ENCODE measurements at regions of chr17 and their contacts with region 1.

Region 1: DNA sequence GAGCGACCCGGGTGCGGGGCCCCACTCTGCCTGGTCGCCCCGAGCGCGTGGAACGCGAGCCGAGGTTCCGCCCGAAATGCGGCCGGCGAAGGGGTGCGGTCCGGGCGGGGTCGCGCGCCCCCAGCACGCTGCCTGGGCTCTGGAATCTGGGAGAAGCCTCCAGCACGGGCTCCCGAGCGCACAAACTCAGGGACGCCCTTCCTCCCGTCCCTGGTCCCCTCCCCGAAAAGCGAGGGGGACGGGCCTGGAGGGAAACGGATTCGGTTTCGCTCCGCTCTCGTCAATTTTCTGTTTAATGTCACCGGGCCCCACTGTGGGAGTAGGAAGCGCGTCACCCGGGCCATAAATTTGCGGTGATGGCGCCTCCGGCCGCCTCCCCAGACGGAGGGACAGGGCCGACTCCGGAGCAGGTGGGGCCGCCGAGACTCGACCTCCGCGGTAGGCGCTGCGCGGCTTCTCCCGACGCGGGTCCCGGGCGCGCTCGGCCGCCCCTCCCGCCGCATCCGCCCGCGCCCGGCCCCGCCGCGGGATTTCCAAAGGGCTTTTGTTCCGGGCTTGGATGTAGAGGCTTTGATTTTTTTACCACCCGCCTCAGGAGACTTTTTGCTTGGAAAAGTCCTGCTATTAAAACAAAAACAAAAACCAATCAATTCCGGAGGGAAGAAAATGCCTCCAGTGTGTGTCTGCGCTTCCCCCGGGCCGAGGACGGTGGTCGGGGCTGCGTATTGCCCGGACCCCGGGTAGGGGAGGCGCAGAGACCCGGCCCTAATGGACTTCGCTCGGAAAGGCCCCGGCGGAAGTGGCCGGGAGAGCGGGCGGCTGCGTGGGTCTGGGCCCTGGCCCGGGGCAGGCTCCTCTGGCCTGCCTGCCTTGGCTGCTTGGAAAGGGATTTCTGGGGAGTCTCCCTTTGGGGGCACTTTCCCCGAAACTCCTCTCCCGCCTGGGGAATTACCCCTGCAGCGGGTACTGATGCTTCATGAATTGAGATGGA is 7.9 kb upstream of the BAHCC1 start:
- DNase-seq: peak in 1 of 2 donors; percentile 65
- H3K4me3 ChIP-seq: peak overlapping the region; percentile 74 to 83
- H3K27ac ChIP-seq: peak overlapping the region; percentile 91 to 96
- H3K4me1 ChIP-seq: peaks cover 0 to 63% (median 47%) of the 10 kb centered on the region in 4 donors
- H3K27me3 ChIP-seq: peaks cover 0 to 13% of the 10 kb centered on the region in 2 donors
- CTCF ChIP-seq: no peak

Region 2: DNA sequence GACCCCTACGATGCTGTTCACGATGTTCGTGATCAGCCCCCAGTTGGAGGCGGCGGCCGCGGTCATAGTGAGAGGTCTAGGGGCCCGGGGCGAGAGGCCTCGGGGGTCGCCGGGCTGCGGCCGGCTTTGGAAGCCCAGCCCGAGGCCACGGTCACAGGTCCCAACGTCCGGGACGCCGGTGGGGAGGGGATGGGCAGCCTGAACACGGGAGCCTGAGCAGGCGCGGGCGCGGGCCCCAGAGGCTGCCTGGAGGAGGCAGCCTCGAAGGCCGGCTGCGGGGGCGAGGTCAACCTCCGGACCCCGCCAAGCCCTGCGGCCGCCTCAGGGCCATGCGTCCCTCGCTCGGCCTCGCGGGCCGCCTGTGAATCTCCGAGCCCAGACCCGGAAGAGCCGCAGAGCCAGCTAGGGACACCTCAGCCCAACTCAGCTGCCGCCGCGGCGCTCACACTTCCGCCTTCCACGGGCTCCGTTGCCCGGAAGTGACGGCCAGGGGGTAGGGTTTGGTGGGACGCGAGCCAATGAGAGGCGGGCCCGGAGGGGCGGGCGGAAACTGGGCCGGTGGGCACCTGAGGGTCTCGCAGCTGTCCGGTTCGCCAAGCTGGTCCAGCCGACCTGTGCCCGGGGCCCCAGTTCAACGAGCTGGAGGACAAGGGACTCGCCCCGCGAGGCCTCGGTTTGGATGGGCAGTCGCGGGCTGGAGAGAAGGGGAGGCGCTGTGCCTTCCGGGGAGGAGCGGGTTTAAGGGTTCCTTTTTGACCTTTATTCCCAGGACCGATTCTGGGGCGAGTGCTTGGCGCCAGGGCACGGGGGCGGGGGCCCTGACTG is 92.3 kb before region 1 on chr17 and contains the start of gene SLC38A10:
- intact Hi-C with region 1: loop called (anchors 5 kb)
- DNase-seq: peak; percentile 91 to 94
- H3K4me3 ChIP-seq: peak within 1 kb of the TSS; percentile 93 to 97
- H3K27ac ChIP-seq: peak within 1 kb of the TSS; percentile 92 to 96
- H3K4me1 ChIP-seq: peaks cover 0 to 44% (median 31%) of the 10 kb centered on the region in 4 donors
- H3K27me3 ChIP-seq: no peaks in the 10 kb centered on the region
- CTCF ChIP-seq: peak in 1 of 2 experiments; percentile 6

Measured in tibial artery (tissue), 4 donors.